Caco-2 (cell line): ENCODE measurements at regions of chr17 and their contacts with region 1.

Region 1: GRCh38 chr17:49390548-49391324 is 23.9 kb downstream of the PHB1 start:
- DNase-seq: no peak
- H3K4me3 ChIP-seq: no peak overlapping the region
- H3K4me3 Mint-ChIP-seq: no peak overlapping the region
- H3K27ac Mint-ChIP-seq: no peak overlapping the region
- H3K4me1 ChIP-seq: peaks cover 9% of the 10 kb centered on the region; the same call in 1 of the 2 replicates
- H3K4me1 Mint-ChIP-seq: no peaks in the 10 kb centered on the region
- H3K27me3 ChIP-seq: no peaks in the 10 kb centered on the region
- H3K27me3 Mint-ChIP-seq: no peaks in the 10 kb centered on the region
- CTCF ChIP-seq: no peak

Region 2: GRCh38 chr17:49290690-49291359 is 99.9 kb before region 1 on chr17:
- CTCF ChIA-PET with region 1: no interaction called
- POLR2A ChIA-PET with region 1: no interaction called
- intact Hi-C with region 1: no loop called
- DNase-seq: peak in 1 of 2 experiments; percentile 61
- H3K4me3 ChIP-seq: no peak overlapping the region
- H3K4me3 Mint-ChIP-seq: no peak overlapping the region
- H3K27ac Mint-ChIP-seq: no peak overlapping the region
- H3K4me1 ChIP-seq: no peaks in the 10 kb centered on the region
- H3K4me1 Mint-ChIP-seq: no peaks in the 10 kb centered on the region
- H3K27me3 ChIP-seq: no peaks in the 10 kb centered on the region
- H3K27me3 Mint-ChIP-seq: no peaks in the 10 kb centered on the region
- CTCF ChIP-seq: peak; percentile 91 to 92

Region 3: GRCh38 chr17:49315551-49316257 is 75.0 kb before region 1 on chr17:
- CTCF ChIA-PET with region 1: interaction called, 4 read pairs
- POLR2A ChIA-PET with region 1: no interaction called
- intact Hi-C with region 1: loop called (anchors 1 kb)
- DNase-seq: peak; percentile 82 to 87
- H3K4me3 ChIP-seq: no peak overlapping the region
- H3K4me3 Mint-ChIP-seq: no peak overlapping the region
- H3K27ac Mint-ChIP-seq: no peak overlapping the region
- H3K4me1 ChIP-seq: no peaks in the 10 kb centered on the region; the same call in 1 of the 2 replicates
- H3K4me1 Mint-ChIP-seq: no peaks in the 10 kb centered on the region
- H3K27me3 ChIP-seq: no peaks in the 10 kb centered on the region
- H3K27me3 Mint-ChIP-seq: no peaks in the 10 kb centered on the region
- CTCF ChIP-seq: peak; percentile 97 to 99

Region 4: DNA sequence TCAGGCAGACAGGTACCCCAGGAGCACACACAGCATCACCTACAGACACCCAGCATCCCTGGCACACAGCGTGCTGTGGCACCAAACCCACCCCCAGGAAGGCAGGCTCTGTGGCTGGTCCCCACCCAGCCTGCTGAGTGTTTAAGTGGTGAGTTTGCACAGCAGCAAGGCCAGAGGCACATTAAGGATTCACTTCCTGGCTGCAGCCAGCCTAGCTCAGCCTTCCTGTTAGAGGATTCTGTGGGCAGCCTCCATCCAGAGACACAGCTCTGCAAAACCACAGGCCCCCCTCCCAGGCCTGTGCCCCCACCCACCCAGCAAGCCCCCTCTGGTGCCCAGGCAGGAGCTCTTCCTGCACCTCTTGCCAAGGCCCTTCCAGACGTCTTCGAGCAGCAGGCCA is 60.0 kb after region 1 on chr17:
- CTCF ChIA-PET with region 1: no interaction called
- POLR2A ChIA-PET with region 1: no interaction called
- intact Hi-C with region 1: no loop called
- DNase-seq: no peak
- H3K4me3 ChIP-seq: no peak overlapping the region
- H3K4me3 Mint-ChIP-seq: no peak overlapping the region
- H3K27ac Mint-ChIP-seq: no peak overlapping the region
- H3K4me1 ChIP-seq: no peaks in the 10 kb centered on the region
- H3K4me1 Mint-ChIP-seq: no peaks in the 10 kb centered on the region
- H3K27me3 ChIP-seq: no peaks in the 10 kb centered on the region
- H3K27me3 Mint-ChIP-seq: peaks cover 12% of the 10 kb centered on the region
- CTCF ChIP-seq: no peak